Activated CD4-positive, alpha-beta memory T cell treated with anti-CD3 and anti-CD28 coated beads, Interleukin-2, amount 10 ng/mL, durations not matched to agents 7 days and 5 days (primary cell): ENCODE measurements at regions of chr2 and their contacts with region 1.

Region 1: DNA sequence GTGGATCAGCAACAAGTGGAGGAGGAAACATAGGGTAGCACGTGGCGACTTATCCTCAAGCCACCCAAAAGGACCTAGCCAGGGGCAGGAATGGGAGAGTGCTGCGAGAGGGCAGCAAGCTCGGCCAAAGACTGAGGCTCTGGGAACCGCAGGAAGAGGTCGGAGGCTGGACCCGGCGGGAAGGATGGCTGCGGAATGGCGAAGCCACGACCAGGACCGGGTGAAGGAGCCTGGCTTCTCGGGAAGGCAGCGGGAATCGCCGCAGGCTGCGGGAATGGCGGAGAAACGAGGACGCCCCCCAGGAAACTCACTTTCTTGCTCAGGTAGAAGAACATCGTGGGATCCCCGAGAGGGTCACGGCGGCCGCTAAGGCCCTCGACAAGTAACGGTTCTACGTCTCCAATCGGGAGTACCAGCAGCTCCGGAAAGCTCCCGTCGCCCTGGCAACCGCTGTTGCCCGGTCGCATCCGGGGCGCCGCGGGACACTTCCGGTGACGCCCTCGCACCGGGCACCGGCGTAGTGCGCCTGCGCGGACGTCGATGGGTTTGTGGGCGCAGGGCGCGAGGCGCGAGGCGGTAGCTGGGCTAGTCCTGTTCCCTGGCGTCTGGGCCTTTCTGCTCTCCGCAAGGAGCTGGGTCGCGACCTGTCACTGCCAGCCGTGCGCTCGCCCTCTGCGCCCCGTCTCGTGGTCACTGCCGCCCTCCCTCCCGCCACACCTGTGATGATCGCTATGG is at the start of gene WDR35:
- DNase-seq: peak; percentile 94
- H3K4me3 Mint-ChIP-seq: peak within 1 kb of the TSS; percentile 85
- H3K27ac Mint-ChIP-seq: peak within 1 kb of the TSS; percentile 53
- H3K4me1 Mint-ChIP-seq: peaks cover 31% of the 10 kb centered on the region
- H3K27me3 Mint-ChIP-seq: peaks cover 27% of the 10 kb centered on the region
- total RNA-seq, gene WDR35: 4.5 to 4.7 TPM

Region 2: GRCh38 chr2:20051532-20052228 is 61.8 kb after region 1 on chr2 and contains the start of gene LAPTM4A:
- CTCF ChIA-PET with region 1: no interaction called
- POLR2A ChIA-PET with region 1: interaction called, 10 read pairs
- DNase-seq: peak; percentile 98
- H3K4me3 Mint-ChIP-seq: no peak within 1 kb of the TSS
- H3K27ac Mint-ChIP-seq: no peak within 1 kb of the TSS
- H3K4me1 Mint-ChIP-seq: peaks cover 27% of the 10 kb centered on the region
- H3K27me3 Mint-ChIP-seq: peaks cover 20% of the 10 kb centered on the region
- total RNA-seq, gene LAPTM4A: 36.1 to 36.7 TPM